Activated CD4-positive, alpha-beta T cell treated with anti-CD3 and anti-CD28 coated beads, Interleukin-2, amount 10 ng/mL, durations not matched to agents 24 days and 14 days (primary cell): ENCODE measurements at regions of chr4 and their contacts with region 1.

Region 1: GRCh38 chr4:40466789-40467188 is 131.7 kb downstream of the CHRNA9 start:
- DNase-seq: no peak
- H3K4me3 Mint-ChIP-seq: no peak overlapping the region
- H3K27ac Mint-ChIP-seq: peak overlapping the region; percentile 71
- H3K4me1 Mint-ChIP-seq: peaks cover 18% of the 10 kb centered on the region
- H3K27me3 Mint-ChIP-seq: no peaks in the 10 kb centered on the region

Region 2: GRCh38 chr4:40180356-40180755 is 286.4 kb before region 1 on chr4:
- intact Hi-C with region 1: no loop called
- DNase-seq: no peak
- H3K4me3 Mint-ChIP-seq: no peak overlapping the region
- H3K27ac Mint-ChIP-seq: no peak overlapping the region
- H3K4me1 Mint-ChIP-seq: peaks cover 19% of the 10 kb centered on the region
- H3K27me3 Mint-ChIP-seq: no peaks in the 10 kb centered on the region

Region 3: GRCh38 chr4:40432504-40432903 is 34.3 kb before region 1 on chr4:
- intact Hi-C with region 1: loop called (anchors 2 kb)
- DNase-seq: no peak
- H3K4me3 Mint-ChIP-seq: peak overlapping the region; percentile 45
- H3K27ac Mint-ChIP-seq: peak overlapping the region; percentile 63
- H3K4me1 Mint-ChIP-seq: peaks cover 48% of the 10 kb centered on the region
- H3K27me3 Mint-ChIP-seq: no peaks in the 10 kb centered on the region

Region 4: DNA sequence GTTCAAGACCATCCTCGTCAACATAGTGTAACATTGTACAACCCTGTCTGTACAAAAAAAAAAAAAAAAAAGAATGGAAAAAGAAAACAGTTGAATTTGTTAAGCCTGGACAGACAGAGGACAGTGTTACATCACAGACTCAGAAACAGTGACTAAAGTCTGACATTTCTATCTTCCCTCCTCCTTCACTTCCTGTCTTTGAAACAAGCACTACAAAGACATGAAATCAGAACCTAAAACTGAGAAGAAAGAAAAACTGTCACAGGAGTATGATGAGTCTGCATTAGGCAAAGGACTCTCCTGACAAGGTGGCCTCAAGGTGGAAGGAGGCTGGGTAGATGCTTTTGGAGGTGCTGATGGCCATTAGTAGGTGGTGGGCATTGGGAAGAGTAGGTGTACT is 36.1 kb after region 1 on chr4:
- intact Hi-C with region 1: loop called (anchors 2 kb)
- DNase-seq: peak; percentile 63
- H3K4me3 Mint-ChIP-seq: peak overlapping the region; percentile 60
- H3K27ac Mint-ChIP-seq: peak overlapping the region; percentile 87
- H3K4me1 Mint-ChIP-seq: peaks cover 19% of the 10 kb centered on the region
- H3K27me3 Mint-ChIP-seq: no peaks in the 10 kb centered on the region